HEK293 (cell line): ENCODE measurements at regions of chr6 and their contacts with region 1.

Region 1: GRCh38 chr6:32825966-32826365 is 9.2 kb upstream of the HLA-DOB start:
- H3K4me3 ChIP-seq: no peak overlapping the region
- H3K27ac ChIP-seq: no peak overlapping the region
- H3K4me1 ChIP-seq: no peaks in the 10 kb centered on the region
- CTCF ChIP-seq: peak; percentile 51; the same call in 1 of the 2 replicates

Region 2: GRCh38 chr6:32860674-32861073 is 34.7 kb after region 1 on chr6:
- CTCF ChIA-PET with region 1: interaction called, 11 read pairs
- POLR2A ChIA-PET with region 1: no interaction called
- H3K4me3 ChIP-seq: no peak overlapping the region
- H3K27ac ChIP-seq: no peak overlapping the region
- H3K4me1 ChIP-seq: no peaks in the 10 kb centered on the region
- CTCF ChIP-seq: no peak